Endothelial cell of umbilical vein (primary cell): ENCODE measurements at regions of chr10 and their contacts with region 1.

Region 1: GRCh38 chr10:110758898-110759297 is 112.8 kb upstream of the PDCD4 start:
- DNase-seq: peak; percentile 89
- H3K4me3 ChIP-seq: no peak overlapping the region
- H3K27ac ChIP-seq: peak overlapping the region; percentile 64
- H3K4me1 ChIP-seq: peaks cover 18% of the 10 kb centered on the region
- H3K27me3 ChIP-seq: peaks cover 0 to 8% of the 10 kb centered on the region in 2 experiments
- CTCF ChIP-seq: no peak
- POLR2A ChIP-seq: peak; percentile 72

Region 2: DNA sequence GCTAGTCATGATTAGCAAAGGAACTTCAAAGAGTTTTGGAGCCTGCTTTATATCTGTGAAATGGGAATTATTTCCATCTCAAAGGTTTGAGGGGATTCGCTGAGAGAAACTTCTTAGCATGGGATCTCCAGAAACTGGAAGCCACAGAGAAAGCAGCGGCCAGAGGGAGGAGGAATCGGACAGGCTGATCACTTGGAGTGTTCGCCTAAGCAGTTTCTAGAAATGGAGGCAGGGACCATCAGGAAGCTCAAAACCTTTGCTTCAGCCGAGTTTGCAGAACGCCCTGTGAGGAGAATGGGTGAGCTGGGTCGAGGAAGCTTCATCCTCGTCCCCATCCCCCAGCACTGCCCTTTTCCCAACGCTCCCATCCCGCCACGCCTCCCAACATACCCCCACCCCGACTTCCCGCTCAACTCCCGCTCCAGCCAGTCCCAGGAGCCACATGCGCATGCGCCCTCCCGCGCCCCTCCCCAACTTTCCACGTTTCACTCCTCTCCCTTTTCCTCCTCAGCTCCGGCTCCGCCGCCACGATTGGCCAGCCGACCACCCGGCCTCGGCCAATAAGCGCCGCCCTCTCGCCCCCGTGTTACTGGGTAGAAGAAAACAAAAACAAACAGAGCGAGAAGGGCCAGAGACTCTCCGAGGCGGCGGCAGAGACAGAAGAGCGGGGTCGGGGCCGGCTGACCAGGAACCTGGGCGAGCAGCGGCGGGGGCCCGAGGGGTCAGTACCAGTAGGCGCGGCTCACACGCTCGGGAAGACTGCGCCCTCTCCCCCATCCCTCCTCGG is 112.6 kb after region 1 on chr10 and contains the start of gene PDCD4:
- CTCF ChIA-PET with region 1: interaction called, 5 read pairs
- POLR2A ChIA-PET with region 1: interaction called, 8 read pairs
- dilution Hi-C with region 1: no loop called
- intact Hi-C with region 1: loop called (anchors 1 kb)
- DNase-seq: peak; percentile 99
- H3K4me3 ChIP-seq: peak within 1 kb of the TSS; percentile 55 to 96 (median 85)
- H3K27ac ChIP-seq: peak within 1 kb of the TSS; percentile 57
- H3K4me1 ChIP-seq: peaks cover 21% of the 10 kb centered on the region
- H3K27me3 ChIP-seq: peaks cover 5 to 7% of the 10 kb centered on the region in 2 experiments
- CTCF ChIP-seq: no peak
- POLR2A ChIP-seq: peak; percentile 80
- total RNA-seq, gene PDCD4: 46.1 and 47.9 TPM in 2 replicates